GM12878 (cell line): ENCODE measurements at regions of chr1 and their contacts with region 1.

Region 1: GRCh38 chr1:183080406-183080805 is 57.2 kb downstream of the LAMC1 start:
- DNase-seq: no peak
- ATAC-seq: peak; percentile 34
- H3K4me3 ChIP-seq: no peak overlapping the region
- H3K27ac ChIP-seq: no peak overlapping the region
- H3K4me1 ChIP-seq: 0 out of 2 replicates have a peak, but pooled peaks cover 4% of the 10 kb centered on the region
- H3K27me3 ChIP-seq: no peaks in the 10 kb centered on the region
- CTCF ChIP-seq: no peak
- EP300 ChIP-seq: no peak
- POLR2A ChIP-seq: no peak
- RAD21 ChIP-seq: no peak

Region 2: GRCh38 chr1:183093786-183094318 is 13.4 kb after region 1 on chr1:
- CTCF ChIA-PET with region 1: interaction called, 5 read pairs
- POLR2A ChIA-PET with region 1: interaction called, 3 read pairs
- RAD21 ChIA-PET with region 1: no interaction called
- SMC1A ChIA-PET with region 1: interaction called, 20 read pairs
- in situ Hi-C with region 1: no loop called
- intact Hi-C with region 1: no loop called
- DNase-seq: no peak
- ATAC-seq: no peak
- H3K4me3 ChIP-seq: no peak overlapping the region
- H3K27ac ChIP-seq: no peak overlapping the region
- H3K4me1 ChIP-seq: peaks cover 11% of the 10 kb centered on the region; the same call in 1 of the 2 replicates
- H3K27me3 ChIP-seq: no peaks in the 10 kb centered on the region
- CTCF ChIP-seq: no peak
- EP300 ChIP-seq: no peak
- POLR2A ChIP-seq: no peak
- RAD21 ChIP-seq: no peak

Region 3: DNA sequence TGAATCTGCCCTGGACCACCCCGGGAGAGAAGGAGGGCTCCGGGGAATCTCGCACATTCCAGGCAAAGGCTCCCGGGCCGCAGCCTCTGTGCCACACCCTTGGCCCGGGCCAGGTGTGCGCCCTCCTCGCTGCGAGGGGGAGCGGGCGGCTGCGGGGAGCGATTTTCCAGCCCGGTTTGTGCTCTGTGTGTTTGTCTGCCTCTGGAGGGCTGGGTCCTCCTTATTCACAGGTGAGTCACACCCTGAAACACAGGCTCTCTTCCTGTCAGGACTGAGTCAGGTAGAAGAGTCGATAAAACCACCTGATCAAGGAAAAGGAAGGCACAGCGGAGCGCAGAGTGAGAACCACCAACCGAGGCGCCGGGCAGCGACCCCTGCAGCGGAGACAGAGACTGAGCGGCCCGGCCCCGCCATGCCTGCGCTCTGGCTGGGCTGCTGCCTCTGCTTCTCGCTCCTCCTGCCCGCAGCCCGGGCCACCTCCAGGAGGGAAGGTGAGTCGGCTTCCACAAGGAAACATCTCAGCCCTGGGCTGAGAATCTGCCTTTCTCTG is 105.6 kb after region 1 on chr1 and contains the start of gene LAMC2:
- CTCF ChIA-PET with region 1: no interaction called
- POLR2A ChIA-PET with region 1: no interaction called
- RAD21 ChIA-PET with region 1: no interaction called
- SMC1A ChIA-PET with region 1: no interaction called
- in situ Hi-C with region 1: no loop called
- intact Hi-C with region 1: no loop called
- DNase-seq: no peak
- ATAC-seq: peak; percentile 31; the same call in 2 of the 3 replicates
- H3K4me3 ChIP-seq: no peak within 1 kb of the TSS
- H3K27ac ChIP-seq: no peak within 1 kb of the TSS
- H3K4me1 ChIP-seq: peaks cover 1% of the 10 kb centered on the region; the same call in 1 of the 2 replicates
- H3K27me3 ChIP-seq: no peaks in the 10 kb centered on the region
- CTCF ChIP-seq: no peak
- EP300 ChIP-seq: no peak
- POLR2A ChIP-seq: no peak
- RAD21 ChIP-seq: no peak
- polyA plus RNA-seq, gene LAMC2: 0.77 to 0.93 TPM